Dorsolateral prefrontal cortex (tissue), 120 donors: ENCODE measurements at regions of chr13 and their contacts with region 1.

Region 1: DNA sequence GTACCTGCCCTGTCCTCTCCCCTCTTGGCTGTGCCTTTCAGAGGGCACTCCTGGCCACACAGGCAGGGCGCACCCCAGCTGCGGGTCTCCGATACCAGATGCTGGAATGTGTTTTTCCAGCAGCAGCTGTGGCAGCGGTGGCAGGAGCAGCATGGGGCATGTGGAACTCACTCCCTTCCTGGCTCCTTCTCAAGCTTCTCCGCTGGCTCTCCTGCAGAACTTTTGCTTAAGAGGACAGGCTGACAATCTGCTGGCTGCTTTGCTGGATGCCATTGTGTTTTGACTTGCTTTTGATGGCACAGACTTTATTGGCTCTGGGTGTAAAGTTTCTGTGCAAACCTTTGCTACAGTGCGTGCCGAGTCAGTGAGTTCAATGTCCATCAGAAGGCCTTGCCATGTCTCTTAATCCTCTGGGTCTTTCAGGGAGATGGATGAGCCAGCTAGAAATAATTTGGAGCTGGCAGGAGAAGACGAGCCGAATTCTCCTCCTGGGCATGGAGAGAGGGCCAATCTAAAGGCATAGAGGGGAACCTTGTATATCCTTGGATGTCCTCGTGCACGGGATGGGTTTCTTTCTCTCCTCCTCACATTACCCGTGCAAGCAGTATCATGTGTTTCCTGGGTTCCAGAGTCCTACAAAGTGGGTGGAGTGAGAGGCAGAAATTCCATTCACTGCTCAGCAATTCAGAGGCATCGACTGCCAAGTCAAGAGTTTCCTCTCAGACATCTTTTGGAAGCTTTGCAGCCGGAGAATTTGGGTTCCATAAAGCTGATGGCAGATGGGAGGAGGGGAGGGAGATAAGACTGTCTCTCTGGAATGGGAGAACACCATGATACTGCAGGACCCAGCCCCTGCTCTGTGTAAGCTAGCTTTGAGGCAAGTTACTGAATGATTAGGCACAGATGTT is 231.2 kb downstream of the FGF9 start:
- DNase-seq: no peak
- H3K4me3 ChIP-seq: no peak overlapping the region
- H3K27ac ChIP-seq: no peak overlapping the region
- H3K27me3 ChIP-seq: peaks cover 0 to 16% (median 0%) of the 10 kb centered on the region in 45 donors
- CTCF ChIP-seq: no peak

Region 2: GRCh38 chr13:21767025-21767424 is 135.0 kb before region 1 on chr13:
- intact Hi-C with region 1: no loop called
- DNase-seq: no peak
- H3K4me3 ChIP-seq: no peak overlapping the region
- H3K27ac ChIP-seq: no peak overlapping the region
- H3K27me3 ChIP-seq: peaks cover 0 to 11% (median 0%) of the 10 kb centered on the region in 45 donors
- CTCF ChIP-seq: no peak

Region 3: GRCh38 chr13:21913010-21913409 is 11.0 kb after region 1 on chr13:
- intact Hi-C with region 1: loop called in 1 of 2 experiments (anchors 1 kb)
- DNase-seq: no peak
- H3K4me3 ChIP-seq: no peak overlapping the region
- H3K27ac ChIP-seq: no peak overlapping the region
- H3K27me3 ChIP-seq: peaks cover 0 to 5% (median 0%) of the 10 kb centered on the region in 45 donors
- CTCF ChIP-seq: no peak